Tibial artery (tissue), 4 donors: ENCODE measurements at regions of chr16 and their contacts with region 1.

Region 1: GRCh38 chr16:4550591-4550990 is 5.5 kb upstream of the C16orf96 start:
- DNase-seq: no peak
- H3K4me3 ChIP-seq: no peak overlapping the region
- H3K27ac ChIP-seq: no peak overlapping the region
- H3K4me1 ChIP-seq: no peaks in the 10 kb centered on the region
- H3K27me3 ChIP-seq: peaks cover 0 to 13% of the 10 kb centered on the region in 2 donors
- CTCF ChIP-seq: no peak

Region 2: DNA sequence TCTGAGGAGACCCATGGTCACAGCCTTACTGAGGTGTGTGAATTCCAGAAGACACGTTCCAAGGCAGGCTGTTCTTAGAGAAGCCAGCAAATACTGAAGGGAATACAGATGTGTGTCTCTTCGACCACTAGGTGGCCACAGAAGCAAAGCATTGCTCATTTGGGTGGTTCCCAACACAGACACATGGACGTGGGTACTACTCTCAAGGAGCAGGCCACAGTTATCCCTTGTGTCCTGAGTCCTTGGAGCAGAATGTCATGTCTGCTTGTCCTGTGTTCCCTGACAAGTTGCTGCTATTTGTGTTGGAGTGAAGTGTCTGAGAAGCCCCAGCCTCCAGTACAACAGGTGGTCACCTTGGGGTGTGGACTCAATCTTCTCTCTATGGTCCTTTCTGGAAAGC is 44.1 kb before region 1 on chr16:
- intact Hi-C with region 1: loop called (anchors 5 kb)
- DNase-seq: peak; percentile 42 to 77
- H3K4me3 ChIP-seq: no peak overlapping the region
- H3K27ac ChIP-seq: no peak overlapping the region
- H3K4me1 ChIP-seq: peaks cover 0 to 5% (median 3%) of the 10 kb centered on the region in 4 donors
- H3K27me3 ChIP-seq: no peaks in the 10 kb centered on the region
- CTCF ChIP-seq: peak; percentile 69 to 83